ENCODE measurements at regions of chr7 and their contacts with region 1.

Region 1: GRCh38 chr7:94657771-94658693 is 2.1 kb upstream of the SGCE start:
- DNase-seq: peak; percentile 94
- H3K4me3 ChIP-seq: peak overlapping the region; percentile 71
- H3K27ac ChIP-seq: peak overlapping the region; percentile 42
- H3K4me1 ChIP-seq: peaks cover 5% of the 10 kb centered on the region
- CTCF ChIP-seq: peak; percentile 29; the same call in 1 of the 2 replicates

Region 2: DNA sequence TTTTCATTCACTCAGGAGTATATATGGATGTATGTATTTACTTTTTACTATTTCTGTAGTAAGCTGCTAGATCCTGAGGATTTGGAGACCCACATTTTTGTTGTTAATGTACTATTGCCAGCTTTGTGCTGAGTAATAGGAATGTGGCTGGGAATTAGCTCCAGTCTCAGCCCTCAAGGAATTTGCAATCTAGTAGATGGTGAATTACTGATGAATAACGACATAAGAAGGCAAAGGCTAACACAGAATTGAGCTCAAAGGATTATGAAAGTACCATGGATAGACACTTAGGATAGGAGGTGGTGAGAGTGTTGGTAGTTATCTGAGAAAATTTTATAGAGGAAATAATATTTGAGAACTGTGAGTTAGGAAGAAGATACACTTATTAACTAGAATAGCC is 128.5 kb before region 1 on chr7:
- CTCF ChIA-PET with region 1: no interaction called
- POLR2A ChIA-PET with region 1: no interaction called
- intact Hi-C with region 1: no loop called
- DNase-seq: no peak
- H3K4me3 ChIP-seq: no peak overlapping the region
- H3K27ac ChIP-seq: no peak overlapping the region
- H3K4me1 ChIP-seq: no peaks in the 10 kb centered on the region
- CTCF ChIP-seq: no peak

Region 3: GRCh38 chr7:94647295-94647694 is 10.7 kb before region 1 on chr7:
- CTCF ChIA-PET with region 1: interaction called, 12 read pairs
- POLR2A ChIA-PET with region 1: interaction called, 5 read pairs
- intact Hi-C with region 1: no loop called
- DNase-seq: no peak
- H3K4me3 ChIP-seq: no peak overlapping the region
- H3K27ac ChIP-seq: no peak overlapping the region
- H3K4me1 ChIP-seq: no peaks in the 10 kb centered on the region
- CTCF ChIP-seq: no peak

Region 4: GRCh38 chr7:94792270-94792669 is 134.2 kb after region 1 on chr7:
- CTCF ChIA-PET with region 1: no interaction called
- POLR2A ChIA-PET with region 1: no interaction called
- intact Hi-C with region 1: no loop called
- DNase-seq: no peak
- H3K4me3 ChIP-seq: no peak overlapping the region
- H3K27ac ChIP-seq: no peak overlapping the region
- H3K4me1 ChIP-seq: no peaks in the 10 kb centered on the region
- CTCF ChIP-seq: no peak

Measured in OCI-LY7 (cell line).